ENCODE measurements at regions of chr9 and their contacts with region 1.

Region 1: DNA sequence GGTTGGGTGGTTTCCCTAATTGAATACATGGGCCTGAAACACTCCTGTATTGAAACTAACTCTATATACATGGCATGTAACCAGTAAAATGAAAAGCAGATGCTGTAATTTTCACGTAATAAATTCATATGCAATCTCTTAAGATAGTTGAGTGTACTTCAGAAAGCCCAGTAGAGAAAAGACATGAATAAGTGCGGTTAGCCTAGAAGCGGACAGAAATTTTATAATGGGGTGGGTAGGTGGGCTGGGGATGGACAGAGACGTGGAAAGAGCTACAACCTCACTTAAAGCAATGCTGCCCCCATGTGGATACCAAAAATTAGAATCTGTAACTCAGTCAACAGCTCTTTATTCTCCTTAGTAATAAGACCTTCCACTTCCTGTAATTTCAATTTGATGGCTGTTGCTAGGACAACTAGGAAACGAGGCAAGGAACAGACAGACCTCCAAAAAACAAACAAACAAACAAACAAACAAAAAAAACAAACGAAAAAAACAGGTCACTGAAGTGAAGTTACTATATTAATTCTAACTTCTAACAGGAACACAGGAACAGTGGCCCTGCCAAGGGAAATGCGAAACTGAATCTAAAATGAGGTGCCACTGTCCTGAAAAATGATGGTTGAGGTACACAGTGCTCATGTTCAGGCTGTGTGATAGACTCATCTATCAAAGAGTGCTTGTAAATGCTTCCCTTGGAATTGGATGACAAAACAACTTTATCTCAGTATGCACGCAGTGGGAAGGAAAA is 103.4 kb upstream of the GNA14 start:
- H3K4me3 ChIP-seq: no peak overlapping the region
- H3K27ac ChIP-seq: no peak overlapping the region
- H3K4me1 ChIP-seq: no peaks in the 10 kb centered on the region
- CTCF ChIP-seq: peak; percentile 41

Region 2: GRCh38 chr9:77462066-77462465 is 289.4 kb before region 1 on chr9:
- CTCF ChIA-PET with region 1: interaction called, 33 read pairs
- POLR2A ChIA-PET with region 1: no interaction called
- H3K4me3 ChIP-seq: no peak overlapping the region
- H3K27ac ChIP-seq: no peak overlapping the region
- H3K4me1 ChIP-seq: no peaks in the 10 kb centered on the region
- CTCF ChIP-seq: no peak

Region 3: GRCh38 chr9:77764894-77765780 is 13.6 kb after region 1 on chr9:
- CTCF ChIA-PET with region 1: interaction called, 21 read pairs
- POLR2A ChIA-PET with region 1: no interaction called
- H3K4me3 ChIP-seq: no peak overlapping the region
- H3K27ac ChIP-seq: no peak overlapping the region
- H3K4me1 ChIP-seq: no peaks in the 10 kb centered on the region
- CTCF ChIP-seq: no peak

Region 4: GRCh38 chr9:77987081-77987656 is 235.7 kb after region 1 on chr9:
- CTCF ChIA-PET with region 1: no interaction called
- POLR2A ChIA-PET with region 1: no interaction called
- H3K4me3 ChIP-seq: no peak overlapping the region
- H3K27ac ChIP-seq: no peak overlapping the region
- H3K4me1 ChIP-seq: peaks cover 3% of the 10 kb centered on the region; the same call in 1 of the 2 replicates
- CTCF ChIP-seq: no peak